ENCODE measurements at regions of chr2 and their contacts with region 1.

Region 1: GRCh38 chr2:26184555-26185303 is 11.8 kb downstream of the GAREM2 start:
- DNase-seq: peak; percentile 83 to 89 (median 87)
- H3K4me3 ChIP-seq: peak overlapping the region; percentile 24 to 64
- H3K4me3 Mint-ChIP-seq: peak overlapping the region; percentile 83 to 89 (median 86)
- H3K27ac ChIP-seq: peak overlapping the region; percentile 24
- H3K27ac Mint-ChIP-seq: peak overlapping the region in 2 of 7 donors; percentile 46 to 83
- H3K4me1 ChIP-seq: peaks cover 19% of the 10 kb centered on the region
- H3K4me1 Mint-ChIP-seq: peaks cover 10 to 26% (median 18%) of the 10 kb centered on the region in 4 donors
- H3K27me3 ChIP-seq: no peaks in the 10 kb centered on the region
- H3K27me3 Mint-ChIP-seq: peaks cover 8 to 15% of the 10 kb centered on the region in 2 donors

Region 2: GRCh38 chr2:26018176-26018716 is 166.5 kb before region 1 on chr2:
- CTCF ChIA-PET with region 1: no interaction called
- POLR2A ChIA-PET with region 1: no interaction called
- intact Hi-C with region 1: no loop called
- DNase-seq: no peak
- H3K4me3 ChIP-seq: no peak overlapping the region
- H3K4me3 Mint-ChIP-seq: no peak overlapping the region
- H3K27ac ChIP-seq: no peak overlapping the region
- H3K27ac Mint-ChIP-seq: no peak overlapping the region
- H3K4me1 ChIP-seq: no peaks in the 10 kb centered on the region
- H3K4me1 Mint-ChIP-seq: peaks cover 0 to 3% (median 0%) of the 10 kb centered on the region in 4 donors
- H3K27me3 ChIP-seq: no peaks in the 10 kb centered on the region
- H3K27me3 Mint-ChIP-seq: no peaks in the 10 kb centered on the region

Region 3: GRCh38 chr2:26144953-26145680 is 39.6 kb before region 1 on chr2:
- CTCF ChIA-PET with region 1: no interaction called
- POLR2A ChIA-PET with region 1: interaction called, 10 read pairs
- intact Hi-C with region 1: no loop called
- DNase-seq: peak; percentile 47 to 58 (median 49)
- H3K4me3 ChIP-seq: no peak overlapping the region
- H3K4me3 Mint-ChIP-seq: no peak overlapping the region
- H3K27ac ChIP-seq: no peak overlapping the region
- H3K27ac Mint-ChIP-seq: no peak overlapping the region
- H3K4me1 ChIP-seq: no peaks in the 10 kb centered on the region
- H3K4me1 Mint-ChIP-seq: peaks cover 0 to 4% (median 2%) of the 10 kb centered on the region in 4 donors
- H3K27me3 ChIP-seq: peaks cover 6% of the 10 kb centered on the region
- H3K27me3 Mint-ChIP-seq: peaks cover 9 to 10% of the 10 kb centered on the region in 2 donors

Region 4: GRCh38 chr2:26172871-26173775 is 11.6 kb before region 1 on chr2 and contains the start of gene GAREM2:
- CTCF ChIA-PET with region 1: interaction called, 17 read pairs
- POLR2A ChIA-PET with region 1: interaction called, 11 read pairs
- intact Hi-C with region 1: no loop called
- DNase-seq: no peak
- H3K4me3 ChIP-seq: peak within 1 kb of the TSS in 1 of 2 donors; percentile 24
- H3K4me3 Mint-ChIP-seq: peak within 1 kb of the TSS; percentile 60 to 89 (median 78)
- H3K27ac ChIP-seq: no peak within 1 kb of the TSS
- H3K27ac Mint-ChIP-seq: peak within 1 kb of the TSS in 2 of 7 donors; percentile 8 to 50
- H3K4me1 ChIP-seq: peaks cover 12% of the 10 kb centered on the region
- H3K4me1 Mint-ChIP-seq: peaks cover 3 to 19% (median 13%) of the 10 kb centered on the region in 4 donors
- H3K27me3 ChIP-seq: peaks cover 14% of the 10 kb centered on the region
- H3K27me3 Mint-ChIP-seq: peaks cover 17 to 35% of the 10 kb centered on the region in 2 donors
- total RNA-seq, gene GAREM2: 3.2 to 3.6 TPM

Measured in CD4-positive, alpha-beta memory T cell (primary cell).